GM18951 (cell line): ENCODE measurements at regions of chr13 and their contacts with region 1.

Region 1: GRCh38 chr13:30679483-30680330 is 55.6 kb upstream of the ALOX5AP start:
- POLR2A ChIP-seq: no peak

Region 2: DNA sequence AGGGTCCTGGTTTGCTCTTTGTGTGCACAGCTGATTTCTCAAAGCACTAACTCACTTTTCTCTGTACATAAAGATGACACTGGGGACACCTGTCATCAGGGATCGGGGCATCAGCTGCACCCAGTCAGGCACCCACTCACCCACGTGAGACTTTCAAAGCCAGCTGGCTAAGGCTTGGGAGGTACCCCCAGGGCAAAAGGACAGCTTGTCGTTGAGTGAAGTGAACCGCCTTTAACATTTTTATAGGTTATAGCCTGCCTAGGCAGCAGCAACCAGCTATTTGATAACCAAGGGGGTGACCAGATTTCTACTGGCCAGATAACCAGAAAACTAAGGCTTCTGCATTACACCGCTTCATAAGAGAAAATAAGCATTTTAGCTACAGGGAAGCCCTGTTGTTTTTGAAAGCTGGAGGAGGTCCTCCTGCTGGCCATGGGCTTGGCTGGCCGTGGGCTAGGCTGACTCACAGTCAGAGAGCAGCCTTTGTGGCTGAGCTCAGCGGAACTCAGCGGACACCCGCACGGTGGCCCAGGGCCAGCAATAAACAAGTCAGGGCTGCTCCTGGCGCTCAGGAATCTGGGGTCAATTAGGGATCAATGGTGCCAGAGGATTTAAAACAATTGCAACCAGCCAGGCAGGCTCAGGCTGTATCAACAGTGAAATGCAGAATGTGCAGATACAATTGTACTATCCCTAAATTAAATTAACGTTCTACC is 112.7 kb after region 1 on chr13:
- in situ Hi-C with region 1: loop called (anchors 10 kb)
- POLR2A ChIP-seq: no peak